Activated CD8-positive, alpha-beta memory T cell treated with anti-CD3 and anti-CD28 coated beads, Interleukin-2, amount 10 ng/mL, durations not matched to agents 7 days and 5 days (primary cell): ENCODE measurements at regions of chr10 and their contacts with region 1.

Region 1: DNA sequence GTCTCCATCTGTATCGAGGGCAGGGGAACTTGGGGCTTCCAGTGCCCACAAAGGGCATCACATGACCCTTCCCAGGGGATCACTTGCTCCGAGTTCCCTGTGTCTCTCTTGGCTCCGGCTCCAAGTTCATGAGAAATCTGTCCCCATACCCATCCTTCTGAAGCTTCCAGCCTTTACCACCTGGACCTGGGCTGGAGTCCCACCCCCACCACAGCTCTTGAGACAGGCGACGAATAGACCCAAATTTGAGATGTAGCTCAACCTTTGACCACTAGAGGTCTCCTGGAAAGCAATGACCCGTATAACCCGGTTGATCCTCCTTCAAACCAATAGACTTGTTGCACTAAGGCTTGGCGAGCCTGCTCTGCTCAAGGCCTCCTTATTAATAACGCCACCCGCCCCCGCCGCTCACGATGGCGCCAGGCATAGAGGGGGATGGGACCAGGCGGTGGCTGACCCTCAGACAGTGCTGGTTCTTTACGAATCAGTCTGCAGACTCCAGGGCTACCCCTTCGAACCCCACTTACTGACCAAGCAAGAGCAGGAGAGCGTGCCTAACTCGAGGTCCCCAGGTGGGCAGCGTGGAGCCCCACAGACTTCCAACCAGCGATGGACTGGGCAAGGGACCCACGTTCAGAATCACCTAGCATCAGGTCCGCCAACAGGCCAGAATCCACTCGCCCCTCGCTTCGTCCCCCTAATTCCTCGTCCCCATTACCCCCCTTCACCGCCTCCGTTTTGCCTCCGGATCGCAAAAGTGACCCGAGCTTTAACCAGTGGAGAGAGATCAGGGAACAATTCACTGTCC is 4.4 kb upstream of the ARID5B start:
- DNase-seq: peak; percentile 79
- ATAC-seq: peak; percentile 76
- H3K4me3 Mint-ChIP-seq: peak overlapping the region; percentile 67
- H3K27ac Mint-ChIP-seq: peak overlapping the region; percentile 99
- H3K4me1 Mint-ChIP-seq: peaks cover 29% of the 10 kb centered on the region
- H3K27me3 Mint-ChIP-seq: no peaks in the 10 kb centered on the region

Region 2: DNA sequence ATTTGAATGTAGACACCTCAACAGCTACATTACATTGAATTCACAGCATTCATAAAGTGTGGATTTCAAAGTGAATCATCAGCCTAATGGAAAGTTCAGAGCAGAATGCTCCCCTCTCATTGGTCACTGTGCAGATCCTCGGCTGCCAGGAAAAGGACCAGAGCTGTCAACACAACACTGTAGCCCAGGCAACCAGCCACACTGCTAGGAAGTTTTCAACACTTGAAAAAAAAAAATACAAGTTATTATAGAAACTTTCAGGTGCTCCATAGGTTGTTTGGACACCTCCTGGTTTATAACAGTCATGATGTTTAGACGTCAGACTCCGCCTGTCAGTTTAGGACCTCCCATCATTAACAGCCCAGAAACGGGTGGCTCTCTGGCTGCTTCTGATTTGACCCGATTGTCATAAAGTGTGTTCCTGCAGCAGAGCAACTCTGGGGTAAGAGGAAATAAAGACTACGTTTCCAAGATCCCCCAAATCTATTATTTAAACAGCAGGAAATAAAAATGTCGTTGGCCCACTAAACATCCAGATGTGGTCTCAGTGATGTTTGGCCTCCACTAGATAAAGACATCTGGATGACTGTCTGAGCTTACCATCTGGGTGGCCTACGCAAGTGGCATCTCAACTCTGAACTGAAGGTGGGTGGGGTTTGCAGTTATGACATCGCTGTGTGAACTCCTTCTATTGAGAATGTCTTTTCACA is 117.0 kb before region 1 on chr10:
- CTCF ChIA-PET with region 1: no interaction called
- DNase-seq: no peak
- ATAC-seq: peak; percentile 64
- H3K4me3 Mint-ChIP-seq: no peak overlapping the region
- H3K27ac Mint-ChIP-seq: peak overlapping the region; percentile 55
- H3K4me1 Mint-ChIP-seq: peaks cover 45% of the 10 kb centered on the region
- H3K27me3 Mint-ChIP-seq: no peaks in the 10 kb centered on the region

Region 3: GRCh38 chr10:61795551-61795950 is 101.5 kb before region 1 on chr10:
- CTCF ChIA-PET with region 1: no interaction called
- DNase-seq: no peak
- ATAC-seq: no peak
- H3K4me3 Mint-ChIP-seq: no peak overlapping the region
- H3K27ac Mint-ChIP-seq: no peak overlapping the region
- H3K4me1 Mint-ChIP-seq: peaks cover 4% of the 10 kb centered on the region
- H3K27me3 Mint-ChIP-seq: no peaks in the 10 kb centered on the region

Region 4: GRCh38 chr10:61869276-61869675 is 27.8 kb before region 1 on chr10:
- CTCF ChIA-PET with region 1: interaction called, 10 read pairs
- DNase-seq: no peak
- ATAC-seq: no peak
- H3K4me3 Mint-ChIP-seq: no peak overlapping the region
- H3K27ac Mint-ChIP-seq: no peak overlapping the region
- H3K4me1 Mint-ChIP-seq: peaks cover 11% of the 10 kb centered on the region
- H3K27me3 Mint-ChIP-seq: no peaks in the 10 kb centered on the region

Region 5: DNA sequence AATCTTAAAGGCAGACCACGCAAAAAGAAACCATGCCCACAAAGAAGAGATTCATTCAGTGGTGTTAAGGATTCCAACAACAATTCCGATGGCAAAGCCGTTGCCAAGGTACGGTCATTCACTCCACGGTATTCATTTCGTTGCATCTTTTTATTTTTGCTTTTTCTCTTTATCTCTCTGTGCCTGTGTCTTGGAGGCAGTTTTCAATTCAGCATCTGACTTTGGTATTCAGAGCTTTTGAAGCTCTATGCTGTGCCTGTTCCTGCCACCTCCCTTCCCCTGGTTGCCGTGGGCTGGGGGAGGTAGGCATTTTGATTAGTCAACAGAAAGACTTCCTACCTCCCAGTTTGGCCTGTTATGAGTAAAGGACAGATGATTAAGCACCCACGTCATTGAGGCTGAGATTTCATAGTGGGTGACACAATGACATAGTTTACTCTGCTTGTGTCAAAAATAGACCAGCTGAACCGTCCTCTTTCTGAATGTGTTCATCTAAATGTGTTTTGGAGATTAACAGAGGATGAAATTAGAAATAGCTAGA is 153.9 kb after region 1 on chr10:
- CTCF ChIA-PET with region 1: interaction called, 17 read pairs
- DNase-seq: peak; percentile 92
- ATAC-seq: peak; percentile 60
- H3K4me3 Mint-ChIP-seq: peak overlapping the region; percentile 83
- H3K27ac Mint-ChIP-seq: peak overlapping the region; percentile 99
- H3K4me1 Mint-ChIP-seq: peaks cover 93% of the 10 kb centered on the region
- H3K27me3 Mint-ChIP-seq: no peaks in the 10 kb centered on the region

Region 6: DNA sequence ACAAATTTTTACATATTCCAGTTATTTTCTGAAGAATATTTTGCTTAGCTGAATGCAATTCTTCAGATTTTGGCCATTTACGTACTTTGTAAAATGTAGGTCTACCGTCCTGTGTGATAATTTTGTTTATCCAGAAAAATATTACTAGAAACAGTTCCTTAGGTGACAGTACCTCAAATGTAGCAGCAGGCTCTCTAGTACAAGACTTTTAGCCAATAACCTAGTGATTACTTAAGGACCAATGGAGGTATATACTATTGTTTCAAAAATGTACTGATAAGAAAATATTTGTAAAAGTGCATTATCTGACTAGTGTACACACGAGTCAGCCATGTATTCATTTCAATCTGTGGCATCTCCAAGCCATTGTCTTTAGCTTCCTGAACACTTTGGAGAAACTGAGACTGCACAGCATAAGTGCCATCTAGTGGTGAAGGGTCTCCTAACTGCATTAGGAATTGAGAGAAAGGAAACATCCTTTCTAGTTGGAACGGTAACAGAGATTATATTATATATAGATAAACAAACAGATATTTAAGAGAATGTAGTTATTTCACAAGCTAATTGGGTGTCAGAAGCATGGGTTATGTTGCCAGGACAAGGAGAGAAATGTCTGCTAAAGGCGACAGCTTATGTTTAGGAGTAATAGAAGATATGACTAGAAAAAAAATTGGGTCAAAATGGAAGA is 347.9 kb after region 1 on chr10:
- CTCF ChIA-PET with region 1: interaction called, 37 read pairs
- DNase-seq: peak; percentile 74
- ATAC-seq: peak; percentile 82
- H3K4me3 Mint-ChIP-seq: peak overlapping the region; percentile 42
- H3K27ac Mint-ChIP-seq: peak overlapping the region; percentile 82
- H3K4me1 Mint-ChIP-seq: peaks cover 33% of the 10 kb centered on the region
- H3K27me3 Mint-ChIP-seq: no peaks in the 10 kb centered on the region